Endothelial cell of umbilical vein (primary cell): ENCODE measurements at regions of chr9 and their contacts with region 1.

Region 1: DNA sequence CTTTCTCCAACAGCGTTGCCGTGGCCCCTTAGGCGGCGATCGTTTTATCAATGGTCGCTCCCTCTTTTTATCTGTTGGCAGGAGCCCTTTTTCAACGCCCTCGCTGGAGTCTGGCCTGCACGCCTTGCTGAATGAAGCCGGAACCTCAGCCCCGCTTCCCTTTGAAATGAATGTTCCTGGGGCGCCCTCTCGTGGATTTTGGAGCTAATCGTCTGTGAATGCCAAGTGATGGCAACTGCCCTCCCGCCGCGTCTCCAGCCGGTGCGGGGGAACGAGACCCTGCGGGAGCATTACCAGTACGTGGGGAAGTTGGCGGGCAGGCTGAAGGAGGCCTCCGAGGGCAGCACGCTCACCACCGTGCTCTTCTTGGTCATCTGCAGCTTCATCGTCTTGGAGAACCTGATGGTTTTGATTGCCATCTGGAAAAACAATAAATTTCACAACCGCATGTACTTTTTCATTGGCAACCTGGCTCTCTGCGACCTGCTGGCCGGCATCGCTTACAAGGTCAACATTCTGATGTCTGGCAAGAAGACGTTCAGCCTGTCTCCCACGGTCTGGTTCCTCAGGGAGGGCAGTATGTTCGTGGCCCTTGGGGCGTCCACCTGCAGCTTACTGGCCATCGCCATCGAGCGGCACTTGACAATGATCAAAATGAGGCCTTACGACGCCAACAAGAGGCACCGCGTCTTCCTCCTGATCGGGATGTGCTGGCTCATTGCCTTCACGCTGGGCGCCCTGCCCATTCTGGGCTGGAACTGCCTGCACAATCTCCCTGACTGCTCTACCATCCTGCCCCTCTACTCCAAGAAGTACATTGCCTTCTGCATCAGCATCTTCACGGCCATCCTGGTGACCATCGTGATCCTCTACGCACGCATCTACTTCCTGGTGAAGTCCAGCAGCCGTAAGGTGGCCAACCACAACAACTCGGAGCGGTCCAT is 10.0 kb downstream of the S1PR3 start:
- DNase-seq: peak; percentile 77
- H3K4me3 ChIP-seq: no peak overlapping the region
- H3K27ac ChIP-seq: no peak overlapping the region
- H3K4me1 ChIP-seq: no peaks in the 10 kb centered on the region
- H3K27me3 ChIP-seq: no peaks in the 10 kb centered on the region
- CTCF ChIP-seq: peak; percentile 59 to 71
- POLR2A ChIP-seq: no peak

Region 2: DNA sequence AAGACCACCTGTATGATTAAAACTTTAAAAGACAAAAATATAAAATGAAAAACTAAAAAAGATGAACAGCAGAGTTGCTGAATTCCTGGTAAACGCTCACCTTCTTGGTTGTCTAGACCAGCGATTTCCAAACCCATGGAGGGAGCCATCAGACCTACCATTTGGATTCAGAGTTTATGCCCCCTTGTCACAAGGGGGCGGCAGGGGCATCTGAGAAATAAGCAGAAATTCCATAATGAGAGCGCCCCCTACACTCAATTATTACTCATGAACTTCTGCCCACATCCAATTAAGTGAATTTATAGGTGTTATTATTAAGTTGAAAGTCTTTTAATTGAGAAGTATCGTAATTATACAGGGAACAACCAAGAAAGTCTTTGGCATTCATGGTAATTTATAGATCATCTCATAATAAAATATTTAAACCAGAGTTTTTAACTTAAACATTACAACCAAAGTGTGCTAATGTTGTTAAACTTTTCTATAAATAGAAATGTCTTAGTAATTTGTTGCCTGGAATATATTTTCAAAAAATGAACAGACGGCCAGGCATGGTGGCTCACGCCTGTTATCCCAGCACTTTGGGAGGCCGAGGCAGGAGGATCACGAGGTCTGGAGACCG is 827.8 kb before region 1 on chr9:
- CTCF ChIA-PET with region 1: interaction called, 5 read pairs
- POLR2A ChIA-PET with region 1: no interaction called
- dilution Hi-C with region 1: no loop called
- intact Hi-C with region 1: loop called (anchors 1 kb)
- DNase-seq: peak; percentile 74
- H3K4me3 ChIP-seq: no peak overlapping the region
- H3K27ac ChIP-seq: no peak overlapping the region
- H3K4me1 ChIP-seq: no peaks in the 10 kb centered on the region
- H3K27me3 ChIP-seq: no peaks in the 10 kb centered on the region
- CTCF ChIP-seq: peak; percentile 79 to 84
- POLR2A ChIP-seq: no peak

Region 3: GRCh38 chr9:88593537-88594185 is 407.6 kb before region 1 on chr9:
- CTCF ChIA-PET with region 1: interaction called, 65 read pairs
- POLR2A ChIA-PET with region 1: no interaction called
- dilution Hi-C with region 1: no loop called
- intact Hi-C with region 1: loop called (anchors 1 kb)
- DNase-seq: peak; percentile 39
- H3K4me3 ChIP-seq: no peak overlapping the region
- H3K27ac ChIP-seq: no peak overlapping the region
- H3K4me1 ChIP-seq: no peaks in the 10 kb centered on the region
- H3K27me3 ChIP-seq: peaks cover 0 to 5% of the 10 kb centered on the region in 2 experiments
- CTCF ChIP-seq: peak; percentile 51 to 57
- POLR2A ChIP-seq: no peak

Region 4: GRCh38 chr9:88722753-88723152 is 278.5 kb before region 1 on chr9:
- CTCF ChIA-PET with region 1: interaction called, 8 read pairs
- POLR2A ChIA-PET with region 1: no interaction called
- dilution Hi-C with region 1: no loop called
- intact Hi-C with region 1: loop called (anchors 1 kb)
- DNase-seq: peak; percentile 69
- H3K4me3 ChIP-seq: no peak overlapping the region
- H3K27ac ChIP-seq: no peak overlapping the region
- H3K4me1 ChIP-seq: peaks cover 3% of the 10 kb centered on the region
- H3K27me3 ChIP-seq: no peaks in the 10 kb centered on the region
- CTCF ChIP-seq: peak; percentile 40 to 56
- POLR2A ChIP-seq: no peak